GM12878 (cell line): ENCODE measurements at regions of chr9 and their contacts with region 1.

Region 1: DNA sequence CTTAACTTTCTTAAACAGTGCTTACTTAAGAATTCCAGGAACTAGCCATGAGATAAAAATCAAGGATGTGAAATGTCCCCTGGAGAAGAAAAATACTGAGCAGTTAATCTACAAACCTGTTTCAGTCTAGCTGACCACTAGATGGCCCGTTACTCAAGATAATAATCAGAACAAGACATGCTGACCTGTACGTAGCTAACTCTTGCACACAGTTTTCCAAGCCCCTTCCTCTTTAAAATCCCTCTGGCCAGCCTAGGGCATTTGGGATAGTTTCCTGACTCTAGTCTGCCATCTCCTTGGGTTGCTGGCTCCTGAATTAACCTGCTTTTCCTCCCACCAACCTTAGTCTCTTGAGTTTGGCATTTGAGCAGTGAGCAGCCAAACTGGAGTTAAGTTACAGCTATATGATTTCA is 59.2 kb upstream of the TRAF1 start:
- DNase-seq: no peak
- ATAC-seq: peak; percentile 85
- H3K4me3 ChIP-seq: no peak overlapping the region
- H3K27ac ChIP-seq: no peak overlapping the region
- H3K4me1 ChIP-seq: peaks cover 4% of the 10 kb centered on the region; the same call in 1 of the 2 replicates
- H3K27me3 ChIP-seq: no peaks in the 10 kb centered on the region
- CTCF ChIP-seq: peak; percentile 64 to 70 (median 64)
- EP300 ChIP-seq: no peak
- POLR2A ChIP-seq: no peak
- RAD21 ChIP-seq: peak; percentile 74

Region 2: DNA sequence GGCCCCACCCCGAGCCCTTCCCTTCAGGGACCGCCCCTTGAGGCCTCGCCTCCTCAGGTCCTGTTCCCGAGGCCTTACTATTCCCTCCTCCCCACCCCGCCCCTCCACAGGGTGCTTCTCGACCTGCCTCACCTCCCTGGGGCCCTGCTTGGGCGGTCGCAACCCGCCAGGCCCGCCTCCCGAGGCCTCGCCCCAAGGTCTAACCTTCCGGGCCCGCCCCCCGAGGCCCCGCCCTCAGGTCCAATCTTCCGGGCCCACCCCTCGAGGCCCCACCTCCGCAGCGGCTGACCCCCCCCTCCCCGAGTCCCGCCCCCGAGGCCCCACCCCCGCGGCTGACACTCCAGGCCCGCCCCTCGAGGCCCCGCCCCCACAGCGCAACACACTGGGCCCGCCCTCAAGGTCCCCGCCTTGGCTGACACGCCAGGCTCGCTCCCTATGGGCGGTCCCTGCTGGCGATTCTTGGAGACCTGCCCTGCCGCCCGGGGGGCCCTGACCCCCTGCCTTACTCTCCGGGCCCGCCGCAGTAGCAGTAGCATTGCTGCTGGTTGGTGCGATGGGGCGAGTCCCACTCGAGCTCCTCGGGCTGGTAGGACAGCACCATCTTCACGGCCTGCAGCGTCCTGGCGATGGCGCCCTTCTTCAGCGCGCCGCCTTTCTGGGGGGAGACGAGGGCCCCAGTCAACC is 117.0 kb before region 1 on chr9:
- CTCF ChIA-PET with region 1: interaction called, 10 read pairs
- POLR2A ChIA-PET with region 1: no interaction called
- RAD21 ChIA-PET with region 1: interaction called, 3 read pairs
- SMC1A ChIA-PET with region 1: interaction called, 5 read pairs
- in situ Hi-C with region 1: no loop called
- intact Hi-C with region 1: no loop called
- DNase-seq: peak; percentile 77
- ATAC-seq: peak; percentile 96
- H3K4me3 ChIP-seq: peak overlapping the region; percentile 73
- H3K27ac ChIP-seq: peak overlapping the region; percentile 61
- H3K4me1 ChIP-seq: peaks cover 11% of the 10 kb centered on the region
- H3K27me3 ChIP-seq: no peaks in the 10 kb centered on the region
- CTCF ChIP-seq: peak; percentile 50 to 65 (median 64)
- EP300 ChIP-seq: no peak
- POLR2A ChIP-seq: peak; percentile 80
- RAD21 ChIP-seq: peak; percentile 43

Region 3: DNA sequence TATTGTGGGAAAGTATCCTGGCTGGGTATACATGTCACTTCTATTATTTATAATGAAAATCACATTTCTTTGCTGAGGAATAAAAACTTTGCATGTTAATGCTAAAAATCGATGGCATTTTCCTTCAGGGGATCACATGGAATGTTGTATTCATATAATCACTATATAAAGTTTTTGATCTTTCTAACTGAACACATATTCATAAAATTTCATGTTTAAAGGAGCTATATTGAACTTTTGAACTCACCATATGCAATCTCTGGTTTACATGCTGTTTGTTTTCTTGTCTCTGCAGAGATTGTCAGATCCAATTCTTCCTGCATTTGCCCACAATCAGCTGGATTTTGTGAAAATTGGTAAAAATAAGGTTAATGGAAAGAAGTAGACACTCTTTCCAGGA is 25.8 kb before region 1 on chr9:
- CTCF ChIA-PET with region 1: interaction called, 22 read pairs
- POLR2A ChIA-PET with region 1: no interaction called
- RAD21 ChIA-PET with region 1: interaction called, 3 read pairs
- SMC1A ChIA-PET with region 1: interaction called, 4 read pairs
- in situ Hi-C with region 1: no loop called
- intact Hi-C with region 1: no loop called
- DNase-seq: no peak
- ATAC-seq: no peak
- H3K4me3 ChIP-seq: no peak overlapping the region
- H3K27ac ChIP-seq: no peak overlapping the region
- H3K4me1 ChIP-seq: no peaks in the 10 kb centered on the region
- H3K27me3 ChIP-seq: no peaks in the 10 kb centered on the region
- CTCF ChIP-seq: no peak
- EP300 ChIP-seq: no peak
- POLR2A ChIP-seq: no peak
- RAD21 ChIP-seq: no peak

Region 4: DNA sequence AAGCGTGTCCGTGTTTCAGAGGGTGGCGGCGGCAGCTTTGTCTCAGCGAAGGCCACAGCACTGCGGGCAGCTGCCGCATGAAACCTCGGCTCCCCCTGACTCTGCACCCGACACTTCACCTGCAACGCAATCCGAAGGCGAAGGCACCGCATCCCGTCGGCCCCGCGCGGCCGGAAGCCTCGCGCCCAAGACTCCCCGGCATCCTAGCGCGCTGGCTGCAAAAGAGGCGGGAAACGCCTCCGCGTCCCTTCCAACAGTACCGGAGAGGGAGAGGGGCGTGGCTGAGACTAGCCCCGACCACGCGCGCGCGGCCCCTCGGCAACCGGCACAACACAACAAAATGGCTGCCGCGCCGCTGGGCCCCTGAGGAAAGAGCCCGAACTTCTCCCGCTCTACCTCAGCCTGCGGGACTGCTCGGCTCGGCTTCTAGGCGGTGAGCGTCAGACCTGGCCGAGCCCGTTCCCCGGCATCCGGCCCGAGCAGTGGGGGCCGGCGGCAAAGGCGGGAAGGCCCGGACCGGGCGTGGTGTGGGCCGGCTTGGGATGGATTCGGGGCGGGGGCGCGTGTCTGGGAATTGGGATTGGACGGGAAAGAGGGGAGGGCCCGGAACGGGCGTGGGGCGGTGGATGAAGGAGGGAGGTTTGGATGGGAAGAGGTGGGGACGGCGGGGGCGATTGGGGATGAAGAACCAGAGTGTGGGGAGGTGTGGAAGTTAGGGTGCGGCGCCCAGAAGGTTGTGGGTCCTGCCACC is 89.0 kb after region 1 on chr9 and contains the start of gene CNTRL:
- CTCF ChIA-PET with region 1: interaction called, 12 read pairs
- POLR2A ChIA-PET with region 1: no interaction called
- RAD21 ChIA-PET with region 1: interaction called, 6 read pairs
- SMC1A ChIA-PET with region 1: interaction called, 5 read pairs
- in situ Hi-C with region 1: no loop called
- intact Hi-C with region 1: no loop called
- DNase-seq: peak; percentile 62
- ATAC-seq: peak; percentile 84
- H3K4me3 ChIP-seq: peak within 1 kb of the TSS; percentile 91
- H3K27ac ChIP-seq: peak within 1 kb of the TSS; percentile 98
- H3K4me1 ChIP-seq: peaks cover 29% of the 10 kb centered on the region
- H3K27me3 ChIP-seq: no peaks in the 10 kb centered on the region
- CTCF ChIP-seq: no peak
- EP300 ChIP-seq: no peak
- POLR2A ChIP-seq: peak; percentile 93
- RAD21 ChIP-seq: no peak
- polyA plus RNA-seq, gene CNTRL: 20.0 to 22.0 TPM

Region 5: GRCh38 chr9:121156263-121156731 is 170.5 kb after region 1 on chr9:
- CTCF ChIA-PET with region 1: interaction called, 4 read pairs
- POLR2A ChIA-PET with region 1: no interaction called
- RAD21 ChIA-PET with region 1: no interaction called
- SMC1A ChIA-PET with region 1: interaction called, 3 read pairs
- in situ Hi-C with region 1: no loop called
- intact Hi-C with region 1: loop called (anchors 10 kb)
- DNase-seq: peak; percentile 72
- ATAC-seq: peak; percentile 95
- H3K4me3 ChIP-seq: peak overlapping the region; percentile 15; the same call in 1 of the 2 replicates
- H3K27ac ChIP-seq: peak overlapping the region; percentile 82
- H3K4me1 ChIP-seq: peaks cover 20% of the 10 kb centered on the region
- H3K27me3 ChIP-seq: no peaks in the 10 kb centered on the region
- CTCF ChIP-seq: no peak
- EP300 ChIP-seq: peak; percentile 9 to 57; a peak in 3 of 4 replicates
- POLR2A ChIP-seq: no peak
- RAD21 ChIP-seq: no peak

Region 6: DNA sequence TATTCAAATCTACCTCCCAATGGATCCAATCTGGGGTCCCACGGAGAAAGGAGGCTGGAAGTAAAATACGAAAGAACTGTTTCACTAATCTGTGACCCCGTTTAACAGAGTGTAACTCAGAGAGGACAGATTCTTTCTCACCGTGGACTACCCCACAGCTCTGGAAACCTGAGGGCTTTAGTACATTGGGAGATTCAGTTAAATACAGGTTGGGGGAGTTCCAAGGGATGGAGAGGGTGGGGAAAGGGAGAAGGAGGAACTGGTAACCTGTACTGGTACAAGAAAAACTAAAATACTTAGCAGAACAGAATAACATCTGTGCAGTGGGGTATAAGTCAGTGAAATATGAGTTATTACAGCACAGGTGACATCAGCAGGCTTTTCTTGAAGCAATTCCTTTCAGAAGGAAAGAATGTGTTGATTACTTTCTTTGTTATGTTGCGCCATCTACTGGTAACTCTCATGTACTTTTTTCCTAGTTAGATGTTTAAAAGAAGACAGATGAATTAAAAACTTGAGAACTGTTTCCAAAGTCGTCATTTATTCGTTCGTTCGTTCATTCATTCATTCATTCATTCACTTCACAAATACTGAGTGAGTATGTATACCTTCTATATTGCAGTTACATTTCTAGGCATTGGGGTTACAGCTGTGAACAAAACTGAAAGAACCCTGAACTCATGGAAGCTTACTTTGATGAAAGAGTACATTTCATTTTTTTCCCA is 414.2 kb after region 1 on chr9:
- CTCF ChIA-PET with region 1: interaction called, 3 read pairs
- POLR2A ChIA-PET with region 1: no interaction called
- RAD21 ChIA-PET with region 1: no interaction called
- SMC1A ChIA-PET with region 1: interaction called, 4 read pairs
- in situ Hi-C with region 1: no loop called
- intact Hi-C with region 1: loop called (anchors 10 kb)
- DNase-seq: peak; percentile 26
- ATAC-seq: peak; percentile 80
- H3K4me3 ChIP-seq: no peak overlapping the region
- H3K27ac ChIP-seq: no peak overlapping the region
- H3K4me1 ChIP-seq: no peaks in the 10 kb centered on the region
- H3K27me3 ChIP-seq: no peaks in the 10 kb centered on the region
- CTCF ChIP-seq: peak; percentile 33 to 68 (median 46); a peak in 5 of 6 replicates
- EP300 ChIP-seq: no peak
- POLR2A ChIP-seq: no peak
- RAD21 ChIP-seq: peak; percentile 79

Region 7: GRCh38 chr9:121650217-121651007 is 664.6 kb after region 1 on chr9:
- CTCF ChIA-PET with region 1: no interaction called
- POLR2A ChIA-PET with region 1: no interaction called
- RAD21 ChIA-PET with region 1: no interaction called
- SMC1A ChIA-PET with region 1: no interaction called
- in situ Hi-C with region 1: no loop called
- intact Hi-C with region 1: no loop called
- DNase-seq: no peak
- ATAC-seq: peak; percentile 38; the same call in 1 of the 3 replicates
- H3K4me3 ChIP-seq: no peak overlapping the region
- H3K27ac ChIP-seq: no peak overlapping the region
- H3K4me1 ChIP-seq: no peaks in the 10 kb centered on the region
- H3K27me3 ChIP-seq: peaks cover 21 to 26% of the 10 kb centered on the region in 2 experiments
- CTCF ChIP-seq: no peak
- EP300 ChIP-seq: no peak
- POLR2A ChIP-seq: no peak
- RAD21 ChIP-seq: no peak